Left cardiac atrium (tissue), 4 donors: ENCODE measurements at regions of chr20 and their contacts with region 1.

Region 1: GRCh38 chr20:19934792-19935491 is 82.2 kb upstream of the NAA20 start:
- DNase-seq: peak; percentile 72
- ATAC-seq: peak; percentile 43 to 53

Region 2: DNA sequence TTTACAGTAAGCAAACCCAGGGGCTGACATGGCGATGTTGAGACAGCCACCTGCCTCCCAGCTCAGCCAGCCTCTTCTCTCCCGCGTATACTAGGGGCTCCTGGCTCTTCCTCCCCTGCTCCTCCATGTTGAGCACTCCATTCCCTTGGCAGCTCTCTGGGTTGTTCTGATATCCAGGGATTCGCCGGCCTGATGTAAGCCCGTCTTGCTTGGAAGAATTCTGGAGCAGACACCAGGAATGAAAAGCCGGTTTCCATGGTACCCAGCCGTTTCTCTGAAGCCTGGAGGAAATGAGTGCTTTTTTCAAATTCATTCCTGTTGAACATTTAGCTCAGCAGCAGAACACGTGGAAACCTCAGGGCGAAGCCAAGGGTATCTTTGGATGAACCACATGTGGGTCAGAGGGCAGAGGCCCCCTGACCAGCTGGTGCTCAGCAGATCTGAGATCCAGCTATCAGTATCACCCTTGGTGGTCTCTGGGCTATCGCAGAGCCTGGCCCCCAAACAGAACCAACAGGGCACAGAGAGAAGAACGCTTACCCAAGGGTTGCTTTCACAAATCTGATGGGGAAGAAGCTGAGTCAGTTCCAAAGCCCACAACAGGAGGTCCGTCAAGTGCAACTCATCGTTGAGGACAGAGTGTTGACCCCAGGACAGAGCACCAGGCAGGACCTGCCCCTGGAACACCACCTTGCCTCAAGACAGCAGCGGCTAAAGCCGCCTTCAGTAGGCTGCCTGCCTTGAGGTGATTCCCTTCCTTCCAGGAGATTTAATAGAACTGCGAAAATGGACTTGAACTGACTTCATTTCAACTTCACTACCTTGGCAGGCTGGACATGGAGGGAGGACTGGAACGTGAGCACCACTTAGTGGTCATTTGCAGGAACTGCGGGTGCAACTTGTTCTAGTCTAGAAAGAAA is 273.0 kb before region 1 on chr20:
- intact Hi-C with region 1: no loop called
- DNase-seq: peak; percentile 49
- ATAC-seq: peak; percentile 79 to 86

Region 3: DNA sequence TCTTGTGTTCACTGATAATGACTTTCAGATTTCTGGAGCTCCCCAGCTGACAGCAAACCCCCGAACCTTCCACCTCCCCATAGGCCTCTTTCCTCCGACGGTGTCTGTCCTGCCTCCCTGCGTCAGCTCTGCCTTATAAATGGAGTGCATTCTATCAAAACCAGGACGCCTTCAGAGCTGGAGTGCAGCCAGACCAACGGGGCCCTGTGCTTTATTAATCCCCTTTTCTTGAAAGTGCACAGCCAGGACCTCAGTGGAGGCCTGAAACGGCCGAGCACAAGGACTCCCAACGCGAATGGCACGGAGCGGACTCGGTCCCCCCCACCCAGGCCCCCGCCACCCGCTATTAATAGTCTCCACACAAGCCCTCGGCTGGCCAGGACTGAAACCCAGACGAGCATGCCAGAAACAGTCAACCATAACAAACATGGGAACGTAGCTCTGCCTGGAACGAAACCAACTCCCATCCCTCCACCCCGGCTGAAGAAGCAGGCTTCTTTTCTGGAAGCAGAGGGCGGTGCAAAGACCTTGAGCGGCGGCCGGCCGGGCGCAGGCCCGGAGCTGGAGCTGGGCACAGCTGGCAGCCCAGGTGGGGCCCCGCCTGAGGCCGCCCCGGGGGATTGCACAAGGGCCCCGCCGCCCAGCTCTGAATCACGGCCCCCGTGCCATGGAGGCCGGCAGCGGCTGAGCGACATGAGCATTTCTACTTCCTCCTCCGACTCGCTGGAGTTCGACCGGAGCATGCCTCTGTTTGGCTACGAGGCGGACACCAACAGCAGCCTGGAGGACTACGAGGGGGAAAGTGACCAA is 39.9 kb after region 1 on chr20:
- intact Hi-C with region 1: loop called in 1 of 2 experiments (anchors 5 kb)
- DNase-seq: peak; percentile 85
- ATAC-seq: peak; percentile 83 to 88